ENCODE measurements at regions of chr20 and their contacts with region 1.

Region 1: DNA sequence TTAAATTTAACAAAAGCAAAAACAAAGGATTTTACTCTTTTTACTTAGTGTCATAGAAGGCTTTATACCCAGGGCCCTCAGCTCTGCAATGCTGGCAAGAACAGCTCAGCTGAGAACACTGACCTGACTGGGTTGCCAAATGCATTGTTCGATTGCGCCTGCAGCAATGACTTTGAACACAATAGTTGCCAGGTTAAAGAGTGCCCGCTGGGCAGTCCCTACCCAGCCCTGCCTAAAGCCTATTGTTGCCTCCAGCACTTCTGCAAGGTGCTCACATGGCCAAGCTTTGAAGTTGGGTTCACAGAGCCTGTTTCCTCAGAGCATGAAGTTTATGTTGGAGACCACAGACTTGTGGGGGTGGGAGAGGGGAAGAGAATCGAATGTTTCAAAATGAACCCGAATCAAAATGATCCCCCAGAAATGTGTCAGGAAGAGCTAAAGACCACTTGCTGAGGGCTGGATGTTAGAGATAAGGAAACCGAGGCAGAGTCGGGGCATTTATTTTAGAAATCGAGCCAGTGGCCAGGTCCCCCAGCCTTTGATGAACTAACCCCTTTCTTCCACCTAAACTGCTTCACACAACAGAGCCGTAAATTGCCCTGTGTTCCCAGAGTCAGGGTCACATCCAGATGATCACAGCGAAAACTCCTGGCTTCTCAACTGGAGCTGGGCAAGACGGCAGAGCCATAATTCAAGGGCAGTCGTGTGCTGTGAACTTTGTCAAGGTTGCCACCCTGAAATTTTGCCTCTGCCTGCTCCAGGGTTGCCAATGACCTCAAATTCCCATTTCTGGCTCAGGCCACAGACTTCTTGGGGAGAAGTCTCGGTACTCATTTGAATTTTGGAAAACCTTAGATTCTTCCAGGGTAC is 55.0 kb downstream of the FOXA2 start:
- H3K4me3 Mint-ChIP-seq: no peak overlapping the region
- H3K27ac Mint-ChIP-seq: no peak overlapping the region
- H3K4me1 Mint-ChIP-seq: no peaks in the 10 kb centered on the region
- H3K27me3 Mint-ChIP-seq: peaks cover 12% of the 10 kb centered on the region

Region 2: DNA sequence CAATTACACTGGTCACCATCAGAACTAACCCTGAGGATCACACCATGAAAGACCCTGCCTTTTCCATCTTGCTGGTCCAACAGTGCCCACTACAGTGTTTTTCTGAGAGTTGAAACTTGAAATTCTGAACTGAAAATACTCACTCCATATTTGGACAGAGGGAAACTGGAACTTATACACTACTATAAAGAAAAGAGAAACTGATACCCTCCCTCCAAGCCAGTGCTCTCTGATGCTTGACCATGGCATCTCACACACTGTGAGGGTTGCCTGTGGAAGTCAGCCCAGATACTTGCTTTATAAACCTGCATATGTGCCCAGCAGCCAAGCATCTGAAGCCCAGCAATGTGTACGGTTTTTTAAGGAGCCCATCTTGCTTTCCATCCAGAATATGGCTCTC is 53.7 kb before region 1 on chr20:
- intact Hi-C with region 1: loop called (anchors 10 kb)
- H3K4me3 Mint-ChIP-seq: no peak overlapping the region
- H3K27ac Mint-ChIP-seq: no peak overlapping the region
- H3K4me1 Mint-ChIP-seq: no peaks in the 10 kb centered on the region
- H3K27me3 Mint-ChIP-seq: peaks cover 2% of the 10 kb centered on the region

Region 3: GRCh38 chr20:22567944-22568871 is 38.8 kb after region 1 on chr20:
- intact Hi-C with region 1: no loop called
- H3K4me3 Mint-ChIP-seq: no peak overlapping the region
- H3K27ac Mint-ChIP-seq: no peak overlapping the region
- H3K4me1 Mint-ChIP-seq: no peaks in the 10 kb centered on the region
- H3K27me3 Mint-ChIP-seq: peaks cover 82% of the 10 kb centered on the region

Measured in dendritic cell treated with granulocyte-macrophage colony-stimulating factor and Interleukin-4, amounts not matched to agents 40 ng/mL and 50 ng/mL, for 4 days (primary cell).